HepG2 (cell line): ENCODE measurements at regions of chr12 and their contacts with region 1.

Region 1: GRCh38 chr12:86914716-86915115 is 658.5 kb upstream of the MGAT4C start:
- DNase-seq: peak; percentile 1
- ATAC-seq: no peak
- H3K4me3 ChIP-seq: no peak overlapping the region
- H3K27ac ChIP-seq: no peak overlapping the region
- H3K4me1 ChIP-seq: no peaks in the 10 kb centered on the region
- H3K27me3 ChIP-seq: no peaks in the 10 kb centered on the region
- CTCF ChIP-seq: no peak
- EP300 ChIP-seq: no peak
- POLR2A ChIP-seq: no peak
- RAD21 ChIP-seq: no peak

Region 2: GRCh38 chr12:86264451-86265342 is 650.0 kb before region 1 on chr12:
- CTCF ChIA-PET with region 1: no interaction called
- POLR2A ChIA-PET with region 1: no interaction called
- in situ Hi-C with region 1: loop called (anchors 25 kb)
- intact Hi-C with region 1: no loop called
- DNase-seq: no peak
- ATAC-seq: peak; percentile 75
- H3K4me3 ChIP-seq: peak overlapping the region in 1 of 3 experiments; percentile 40; a peak in 1 of 6 replicates
- H3K27ac ChIP-seq: no peak overlapping the region
- H3K4me1 ChIP-seq: no peaks in the 10 kb centered on the region
- H3K27me3 ChIP-seq: no peaks in the 10 kb centered on the region
- CTCF ChIP-seq: no peak
- EP300 ChIP-seq: no peak
- POLR2A ChIP-seq: no peak
- RAD21 ChIP-seq: no peak

Region 3: DNA sequence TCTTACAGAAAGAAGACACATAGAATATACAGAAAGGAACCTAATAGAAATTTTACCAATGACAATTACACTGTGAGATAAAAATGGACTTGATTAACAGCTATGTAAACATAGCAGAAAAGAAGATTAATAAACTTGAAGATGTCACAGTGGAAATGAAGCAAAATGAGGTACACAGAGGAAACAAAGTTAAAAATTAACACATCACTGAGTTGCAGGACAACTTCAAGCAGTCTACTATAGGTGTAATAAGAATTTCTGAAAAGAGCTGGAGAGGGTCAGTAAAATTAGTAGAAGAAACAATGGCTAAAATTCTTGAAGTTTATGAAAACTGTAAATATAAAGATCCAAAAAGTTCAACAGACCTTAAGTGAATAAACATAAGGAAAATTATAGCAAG is 375.8 kb after region 1 on chr12:
- CTCF ChIA-PET with region 1: no interaction called
- POLR2A ChIA-PET with region 1: no interaction called
- in situ Hi-C with region 1: no loop called
- intact Hi-C with region 1: no loop called
- DNase-seq: no peak
- ATAC-seq: no peak
- H3K4me3 ChIP-seq: no peak overlapping the region
- H3K27ac ChIP-seq: no peak overlapping the region
- H3K4me1 ChIP-seq: no peaks in the 10 kb centered on the region
- H3K27me3 ChIP-seq: no peaks in the 10 kb centered on the region; a peak in 1 of 5 replicates
- CTCF ChIP-seq: no peak
- EP300 ChIP-seq: no peak
- POLR2A ChIP-seq: no peak
- RAD21 ChIP-seq: no peak

Region 4: GRCh38 chr12:87413784-87414183 is 499.1 kb after region 1 on chr12:
- CTCF ChIA-PET with region 1: no interaction called
- POLR2A ChIA-PET with region 1: no interaction called
- in situ Hi-C with region 1: no loop called
- intact Hi-C with region 1: no loop called
- DNase-seq: no peak
- ATAC-seq: no peak
- H3K4me3 ChIP-seq: no peak overlapping the region
- H3K27ac ChIP-seq: no peak overlapping the region
- H3K4me1 ChIP-seq: no peaks in the 10 kb centered on the region
- H3K27me3 ChIP-seq: no peaks in the 10 kb centered on the region
- CTCF ChIP-seq: no peak
- EP300 ChIP-seq: no peak
- POLR2A ChIP-seq: no peak
- RAD21 ChIP-seq: no peak